Common myeloid progenitor, CD34-positive (primary cell): ENCODE measurements at regions of chr6 and their contacts with region 1.

Region 1: GRCh38 chr6:42294759-42295158 is 77.1 kb upstream of the MRPS10 start:
- DNase-seq: peak in 2 of 3 donors; percentile 22 to 26
- H3K4me3 ChIP-seq: no peak overlapping the region
- H3K27ac ChIP-seq: no peak overlapping the region
- H3K4me1 ChIP-seq: peaks cover 3 to 15% (median 7%) of the 10 kb centered on the region in 4 experiments
- H3K27me3 ChIP-seq: no peaks in the 10 kb centered on the region

Region 2: GRCh38 chr6:42269553-42269952 is 25.2 kb before region 1 on chr6:
- CTCF ChIA-PET with region 1: no interaction called
- POLR2A ChIA-PET with region 1: no interaction called
- DNase-seq: no peak
- H3K4me3 ChIP-seq: no peak overlapping the region
- H3K27ac ChIP-seq: no peak overlapping the region
- H3K4me1 ChIP-seq: no peaks in the 10 kb centered on the region
- H3K27me3 ChIP-seq: no peaks in the 10 kb centered on the region

Region 3: GRCh38 chr6:42306439-42307140 is 11.8 kb after region 1 on chr6:
- CTCF ChIA-PET with region 1: interaction called, 30 read pairs
- POLR2A ChIA-PET with region 1: no interaction called
- DNase-seq: no peak
- H3K4me3 ChIP-seq: no peak overlapping the region
- H3K27ac ChIP-seq: no peak overlapping the region
- H3K4me1 ChIP-seq: no peaks in the 10 kb centered on the region
- H3K27me3 ChIP-seq: no peaks in the 10 kb centered on the region

Region 4: GRCh38 chr6:43037197-43037596 is 742.4 kb after region 1 on chr6:
- CTCF ChIA-PET with region 1: no interaction called
- POLR2A ChIA-PET with region 1: no interaction called
- DNase-seq: no peak
- H3K4me3 ChIP-seq: no peak overlapping the region
- H3K27ac ChIP-seq: no peak overlapping the region
- H3K4me1 ChIP-seq: peaks cover 0 to 5% (median 0%) of the 10 kb centered on the region in 4 experiments
- H3K27me3 ChIP-seq: no peaks in the 10 kb centered on the region